ENCODE measurements at regions of chr11 and their contacts with region 1.

Region 1: DNA sequence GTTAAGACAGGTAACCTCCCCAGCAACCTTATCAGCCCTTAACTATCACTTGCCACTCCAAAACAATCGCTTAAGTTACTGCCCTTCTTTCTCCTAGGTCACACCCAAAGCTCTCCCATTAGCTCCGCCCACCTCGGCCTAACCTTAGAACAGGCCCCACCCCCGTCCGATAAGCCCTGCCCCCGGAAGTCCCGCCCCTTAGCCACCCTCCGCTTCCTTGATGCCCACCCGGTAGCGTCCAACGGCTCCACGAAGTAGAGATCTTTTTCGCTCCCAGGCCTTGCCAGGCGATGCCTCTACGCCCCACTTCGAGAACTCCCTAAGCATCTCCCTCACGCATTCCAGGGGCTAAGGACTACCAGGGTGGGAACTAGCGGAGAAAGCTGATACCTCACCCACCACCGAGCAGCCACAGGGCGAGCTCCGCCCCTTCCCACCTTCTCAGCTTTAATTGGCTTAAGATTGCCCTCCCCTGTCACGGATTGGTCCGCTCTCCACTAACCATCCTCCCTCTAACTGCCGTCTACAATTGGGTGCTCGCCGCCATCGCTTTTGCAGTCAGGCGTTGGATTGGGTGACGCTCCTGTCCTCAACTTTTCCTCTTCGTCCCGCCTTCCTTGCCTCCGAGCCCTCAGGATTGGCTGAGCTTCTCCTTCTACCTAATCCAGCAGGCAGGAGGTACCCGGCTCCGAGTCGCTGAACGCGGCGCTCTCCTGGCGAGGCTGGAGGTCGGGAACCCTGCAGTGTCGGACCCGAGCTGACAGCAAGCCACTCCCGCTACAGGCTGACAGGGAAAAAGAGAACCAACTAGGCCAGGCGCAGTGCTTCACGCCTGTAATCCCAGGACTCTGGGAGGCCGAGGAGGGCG is at the start of gene ZBTB3:
- DNase-seq: peak; percentile 99
- ATAC-seq: peak; percentile 98
- H3K4me3 ChIP-seq: peak within 1 kb of the TSS; percentile 76 to 87
- H3K27ac ChIP-seq: peak within 1 kb of the TSS; percentile 98
- H3K4me1 ChIP-seq: peaks cover 8% of the 10 kb centered on the region; the same call in 1 of the 2 replicates
- H3K27me3 ChIP-seq: no peaks in the 10 kb centered on the region
- CTCF ChIP-seq: no peak
- total RNA-seq, gene ZBTB3: 12.9 TPM

Region 2: DNA sequence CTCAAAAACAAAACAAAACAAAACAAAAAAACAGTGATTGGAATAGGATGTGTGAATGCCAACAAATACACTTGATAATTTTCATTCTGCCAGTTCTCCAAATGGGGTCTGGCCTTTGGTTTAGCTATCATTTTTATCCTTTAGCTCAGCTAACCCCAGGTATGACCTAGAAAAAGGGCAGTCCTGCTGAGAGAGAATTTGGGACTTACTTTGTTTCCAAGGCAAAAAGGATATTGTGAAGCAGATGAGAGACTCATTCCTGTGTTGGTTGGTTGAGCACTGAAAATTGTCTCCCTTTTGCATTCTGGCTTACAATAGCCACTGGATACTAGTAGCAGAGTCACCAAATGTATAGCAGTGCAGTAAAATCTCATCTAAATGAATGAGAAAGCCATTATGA is 16.8 kb before region 1 on chr11:
- CTCF ChIA-PET with region 1: no interaction called
- POLR2A ChIA-PET with region 1: interaction called, 11 read pairs
- in situ Hi-C with region 1: no loop called
- intact Hi-C with region 1: no loop called
- DNase-seq: no peak
- ATAC-seq: no peak
- H3K4me3 ChIP-seq: no peak overlapping the region
- H3K27ac ChIP-seq: no peak overlapping the region
- H3K4me1 ChIP-seq: no peaks in the 10 kb centered on the region
- H3K27me3 ChIP-seq: no peaks in the 10 kb centered on the region
- CTCF ChIP-seq: no peak

Region 3: GRCh38 chr11:62771144-62772021 is 17.4 kb after region 1 on chr11 and contains the start of gene TAF6L:
- CTCF ChIA-PET with region 1: interaction called, 5 read pairs
- POLR2A ChIA-PET with region 1: interaction called, 16 read pairs
- in situ Hi-C with region 1: no loop called
- intact Hi-C with region 1: no loop called
- DNase-seq: peak; percentile 78
- ATAC-seq: peak; percentile 97
- H3K4me3 ChIP-seq: peak within 1 kb of the TSS; percentile 72 to 73
- H3K27ac ChIP-seq: peak within 1 kb of the TSS; percentile 95
- H3K4me1 ChIP-seq: peaks cover 8% of the 10 kb centered on the region
- H3K27me3 ChIP-seq: no peaks in the 10 kb centered on the region
- CTCF ChIP-seq: no peak
- total RNA-seq, gene TAF6L: 32.6 TPM

Region 4: DNA sequence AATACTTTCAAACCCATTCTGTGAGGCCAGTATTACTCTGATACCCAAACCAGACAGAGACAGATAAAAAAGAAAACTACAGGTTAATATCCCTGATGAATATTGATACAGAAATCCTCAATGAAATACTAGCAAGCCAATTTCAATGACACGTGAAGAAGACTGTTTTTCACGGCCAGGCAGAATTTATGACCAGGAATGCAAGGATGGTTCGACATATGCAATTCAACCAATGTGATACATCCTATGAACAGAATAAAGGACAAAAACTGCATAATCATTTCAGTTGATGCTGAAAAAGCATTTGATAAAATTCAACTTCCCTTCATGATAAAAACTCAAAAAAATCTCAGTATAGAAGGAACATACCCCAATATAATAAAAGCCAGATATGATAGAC is 345.6 kb after region 1 on chr11:
- CTCF ChIA-PET with region 1: no interaction called
- POLR2A ChIA-PET with region 1: no interaction called
- in situ Hi-C with region 1: no loop called
- intact Hi-C with region 1: no loop called
- DNase-seq: no peak
- ATAC-seq: no peak
- H3K4me3 ChIP-seq: no peak overlapping the region
- H3K27ac ChIP-seq: no peak overlapping the region
- H3K4me1 ChIP-seq: no peaks in the 10 kb centered on the region
- H3K27me3 ChIP-seq: no peaks in the 10 kb centered on the region
- CTCF ChIP-seq: no peak

Region 5: GRCh38 chr11:63165706-63166310 is 411.8 kb after region 1 on chr11:
- CTCF ChIA-PET with region 1: no interaction called
- POLR2A ChIA-PET with region 1: no interaction called
- in situ Hi-C with region 1: no loop called
- intact Hi-C with region 1: loop called (anchors 5 kb)
- DNase-seq: no peak
- ATAC-seq: no peak
- H3K4me3 ChIP-seq: no peak overlapping the region
- H3K27ac ChIP-seq: no peak overlapping the region
- H3K4me1 ChIP-seq: no peaks in the 10 kb centered on the region
- H3K27me3 ChIP-seq: peaks cover 11% of the 10 kb centered on the region
- CTCF ChIP-seq: no peak